ENCODE measurements at regions of chr9 and their contacts with region 1.

Region 1: DNA sequence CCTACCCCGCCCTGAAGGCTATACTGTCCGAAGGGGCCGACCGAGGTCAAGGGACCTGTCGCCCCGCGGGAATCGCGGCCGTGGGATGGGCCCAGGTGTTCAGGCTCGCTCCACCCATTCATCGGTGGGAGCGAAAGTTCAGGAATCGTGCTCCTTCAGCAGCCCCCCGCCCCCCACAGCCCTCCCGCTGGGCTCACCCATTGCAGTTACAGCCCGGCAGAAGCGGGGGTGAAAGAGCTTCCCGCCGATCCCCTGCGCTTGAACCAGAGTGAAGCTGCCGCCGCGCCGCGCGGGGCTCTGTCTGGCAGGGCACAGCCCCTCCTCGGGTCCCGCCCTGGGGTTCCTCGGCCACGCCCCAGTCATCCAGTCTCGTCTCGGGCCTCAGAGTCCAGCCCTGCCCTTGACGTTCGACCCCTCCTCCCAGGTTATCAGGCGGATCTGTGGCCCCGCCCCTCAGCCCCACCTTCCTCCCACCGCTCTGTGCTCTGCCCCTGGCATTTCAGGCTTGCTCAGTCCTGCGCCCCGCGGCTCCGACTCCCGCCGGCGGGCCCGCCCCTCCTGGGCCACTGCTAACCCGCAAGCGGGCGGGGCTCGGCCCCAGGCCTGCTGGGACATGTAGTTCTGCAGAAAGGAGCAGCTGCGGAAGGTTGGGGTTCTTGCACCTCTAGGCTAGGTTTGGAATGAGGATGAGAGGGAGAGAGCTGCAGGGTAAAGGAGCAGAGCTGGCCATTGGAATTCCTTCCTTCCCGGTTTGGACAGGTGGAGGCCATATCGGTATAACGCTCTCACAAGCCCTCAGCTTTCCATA is at the start of gene MYORG:
- DNase-seq: peak; percentile 99
- ATAC-seq: peak; percentile 75
- H3K4me3 Mint-ChIP-seq: peak within 1 kb of the TSS; percentile 93
- H3K27ac Mint-ChIP-seq: peak within 1 kb of the TSS; percentile 82
- H3K4me1 Mint-ChIP-seq: peaks cover 36% of the 10 kb centered on the region
- H3K27me3 Mint-ChIP-seq: peaks cover 32% of the 10 kb centered on the region
- CTCF ChIP-seq: no peak
- total RNA-seq, gene MYORG: 9.3 to 18.9 TPM (median 9.7 TPM) in 3 replicates

Region 2: GRCh38 chr9:34332076-34332964 is 44.5 kb before region 1 on chr9:
- CTCF ChIA-PET with region 1: interaction called, 168 read pairs
- POLR2A ChIA-PET with region 1: interaction called, 5 read pairs
- DNase-seq: no peak
- ATAC-seq: no peak
- H3K4me3 Mint-ChIP-seq: no peak overlapping the region
- H3K27ac Mint-ChIP-seq: peak overlapping the region; percentile 58
- H3K4me1 Mint-ChIP-seq: peaks cover 54% of the 10 kb centered on the region
- H3K27me3 Mint-ChIP-seq: no peaks in the 10 kb centered on the region; the same call in 1 of the 2 replicates
- CTCF ChIP-seq: no peak

Region 3: DNA sequence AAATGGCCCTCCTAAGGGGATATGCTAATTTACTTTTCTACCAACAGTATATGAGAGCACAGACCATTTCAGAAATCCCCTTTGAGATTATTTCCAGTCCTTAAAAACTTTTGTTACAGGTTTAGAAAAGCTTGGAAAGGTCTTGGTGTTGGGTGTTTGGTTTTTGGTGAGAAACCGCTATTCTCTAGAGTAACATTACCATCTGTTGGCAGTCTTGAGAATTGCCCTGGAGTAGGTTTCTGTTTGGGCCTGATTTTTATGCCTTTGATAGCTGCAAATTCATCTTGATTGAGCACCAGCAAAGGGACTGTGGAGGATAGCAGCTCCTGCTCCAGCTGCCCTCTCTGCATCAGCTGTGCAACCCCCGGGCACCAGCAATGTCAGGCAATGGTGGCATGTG is 39.4 kb before region 1 on chr9:
- CTCF ChIA-PET with region 1: interaction called, 168 read pairs
- POLR2A ChIA-PET with region 1: interaction called, 5 read pairs
- DNase-seq: no peak
- ATAC-seq: no peak
- H3K4me3 Mint-ChIP-seq: no peak overlapping the region
- H3K27ac Mint-ChIP-seq: no peak overlapping the region; the same call in 1 of the 2 replicates
- H3K4me1 Mint-ChIP-seq: peaks cover 31% of the 10 kb centered on the region
- H3K27me3 Mint-ChIP-seq: no peaks in the 10 kb centered on the region
- CTCF ChIP-seq: no peak

Region 4: DNA sequence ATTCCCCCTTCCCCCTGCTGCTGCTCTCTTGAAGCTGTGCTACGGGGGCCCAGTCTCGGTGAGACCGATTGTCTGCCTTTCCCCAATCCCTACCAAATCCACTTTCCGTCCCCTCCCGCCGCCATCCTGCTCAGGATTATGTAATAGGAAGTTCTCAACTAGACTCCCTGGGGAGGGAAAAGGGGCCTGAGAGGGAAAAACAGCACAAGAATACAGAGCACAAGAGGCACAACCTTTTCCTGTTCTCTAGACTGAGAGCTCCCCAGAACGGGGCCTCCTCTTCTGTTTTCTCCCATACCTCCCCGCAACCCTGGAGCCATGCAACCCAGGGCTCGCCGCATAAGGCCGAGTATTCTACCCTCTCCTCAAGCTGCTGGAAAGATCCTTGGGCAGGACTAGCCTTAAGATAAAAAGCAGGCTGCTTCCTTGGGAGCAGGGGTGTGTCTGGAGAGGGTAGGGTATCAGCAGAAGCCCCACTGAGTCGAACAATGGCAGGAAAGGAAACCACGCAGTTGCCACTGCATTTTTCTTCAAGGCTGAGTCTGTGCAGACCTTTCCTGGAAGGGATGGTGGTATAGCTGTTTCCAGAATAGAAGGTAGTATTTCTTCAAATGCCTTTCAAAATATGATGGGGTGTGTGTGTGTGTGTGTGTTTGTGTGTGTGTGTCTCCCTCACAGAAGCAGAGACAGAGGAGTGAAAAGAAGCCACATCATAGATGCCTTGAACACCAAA is 13.0 kb before region 1 on chr9:
- CTCF ChIA-PET with region 1: interaction called, 13 read pairs
- POLR2A ChIA-PET with region 1: interaction called, 3 read pairs
- DNase-seq: peak; percentile 28
- ATAC-seq: peak; percentile 87
- H3K4me3 Mint-ChIP-seq: peak overlapping the region; percentile 50
- H3K27ac Mint-ChIP-seq: peak overlapping the region; percentile 24; the same call in 1 of the 2 replicates
- H3K4me1 Mint-ChIP-seq: peaks cover 27% of the 10 kb centered on the region
- H3K27me3 Mint-ChIP-seq: no peaks in the 10 kb centered on the region
- CTCF ChIP-seq: no peak